ENCODE measurements at regions of chr1 and their contacts with region 1.

Region 1: GRCh38 chr1:154878371-154879022 is 8.4 kb upstream of the KCNN3 start:
- DNase-seq: peak; percentile 78
- H3K4me3 Mint-ChIP-seq: no peak overlapping the region
- H3K27ac Mint-ChIP-seq: no peak overlapping the region
- H3K4me1 Mint-ChIP-seq: peaks cover 11% of the 10 kb centered on the region
- H3K27me3 Mint-ChIP-seq: peaks cover 21% of the 10 kb centered on the region

Region 2: DNA sequence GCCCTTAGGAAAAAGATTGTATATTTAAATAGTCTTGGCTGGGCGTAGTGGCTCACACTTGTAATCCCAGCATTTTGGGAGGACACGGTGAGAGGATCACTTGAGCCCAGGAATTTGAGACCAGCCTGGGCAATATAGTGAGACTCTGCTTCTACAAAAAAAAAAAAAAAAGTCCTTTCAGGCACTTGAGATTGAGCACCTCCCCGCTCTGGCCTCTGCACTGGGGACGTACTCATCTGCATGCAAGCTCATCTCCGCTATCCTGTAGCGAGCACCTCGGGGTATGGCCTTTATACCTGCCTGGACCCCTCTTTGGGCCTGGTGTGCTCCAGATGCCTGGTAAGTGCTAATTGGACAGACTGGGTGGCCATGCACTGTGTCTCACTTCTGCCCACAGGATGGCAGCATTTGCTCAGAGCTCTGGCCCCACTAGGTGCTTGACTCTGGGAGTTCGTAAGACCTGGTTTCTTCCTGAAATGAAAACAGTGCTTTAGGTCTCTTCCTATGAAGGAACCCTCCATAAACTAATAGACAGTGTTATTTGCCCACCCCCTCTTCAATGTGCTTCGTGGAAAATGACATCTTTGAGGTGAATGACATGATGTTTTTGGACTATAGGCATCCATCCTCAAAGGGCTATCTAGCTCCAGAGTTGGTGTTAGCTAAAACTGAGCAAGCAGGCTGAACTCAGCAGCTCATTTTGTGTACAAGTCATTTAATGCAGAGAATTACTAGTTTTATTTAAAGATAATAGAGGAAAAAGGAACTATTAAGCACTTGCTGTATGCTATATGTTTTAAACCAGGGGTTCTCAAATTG is 208.8 kb before region 1 on chr1:
- CTCF ChIA-PET with region 1: interaction called, 18 read pairs
- POLR2A ChIA-PET with region 1: no interaction called
- DNase-seq: peak; percentile 78
- H3K4me3 Mint-ChIP-seq: no peak overlapping the region
- H3K27ac Mint-ChIP-seq: no peak overlapping the region
- H3K4me1 Mint-ChIP-seq: peaks cover 2% of the 10 kb centered on the region
- H3K27me3 Mint-ChIP-seq: peaks cover 7% of the 10 kb centered on the region

Region 3: DNA sequence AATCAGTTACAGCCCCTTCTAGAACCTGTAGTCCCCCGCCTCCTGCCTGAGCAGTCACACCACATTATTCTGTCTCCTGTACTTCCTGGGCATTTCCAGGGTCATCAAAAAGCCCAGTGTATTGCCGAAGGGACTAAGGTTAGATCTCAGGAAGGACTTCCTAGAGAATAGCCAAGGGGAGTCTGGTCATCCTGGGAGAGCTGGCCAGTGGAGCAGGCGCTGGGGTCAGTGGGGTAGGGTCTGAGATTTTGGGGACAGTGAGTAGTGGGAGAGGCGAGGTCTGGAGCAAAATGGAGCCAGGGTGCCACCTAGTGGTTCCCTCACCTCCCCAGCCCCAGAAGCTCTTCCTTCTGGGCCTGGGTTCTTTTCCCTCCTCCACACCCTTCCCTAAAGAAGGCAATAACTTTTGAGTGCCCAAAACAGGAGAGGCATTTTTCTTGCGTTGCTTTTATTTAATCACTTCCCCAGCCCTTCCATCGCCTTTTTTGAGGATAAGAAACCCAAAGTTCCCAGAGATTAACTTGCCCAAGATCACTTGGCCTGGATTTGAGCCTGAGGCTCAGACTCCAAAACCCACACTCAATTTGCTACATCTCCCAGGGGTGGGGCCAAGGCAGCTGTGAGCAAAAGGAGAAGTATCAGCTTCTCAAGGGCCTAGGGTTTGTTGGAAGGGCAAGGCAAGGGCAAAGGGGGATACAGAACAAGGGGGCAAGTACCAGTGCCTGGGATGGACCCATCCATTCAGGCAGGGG is 65.3 kb after region 1 on chr1:
- CTCF ChIA-PET with region 1: interaction called, 11 read pairs
- POLR2A ChIA-PET with region 1: no interaction called
- DNase-seq: peak; percentile 53
- H3K4me3 Mint-ChIP-seq: peak overlapping the region; percentile 63
- H3K27ac Mint-ChIP-seq: peak overlapping the region; percentile 96
- H3K4me1 Mint-ChIP-seq: peaks cover 67% of the 10 kb centered on the region
- H3K27me3 Mint-ChIP-seq: no peaks in the 10 kb centered on the region

Measured in activated CD4-positive, alpha-beta memory T cell treated with anti-CD3 and anti-CD28 coated beads, Interleukin-2, amount 10 ng/mL, durations not matched to agents 7 days and 5 days (primary cell).